CD14-positive monocyte (primary cell): ENCODE measurements at regions of chr11 and their contacts with region 1.

Region 1: DNA sequence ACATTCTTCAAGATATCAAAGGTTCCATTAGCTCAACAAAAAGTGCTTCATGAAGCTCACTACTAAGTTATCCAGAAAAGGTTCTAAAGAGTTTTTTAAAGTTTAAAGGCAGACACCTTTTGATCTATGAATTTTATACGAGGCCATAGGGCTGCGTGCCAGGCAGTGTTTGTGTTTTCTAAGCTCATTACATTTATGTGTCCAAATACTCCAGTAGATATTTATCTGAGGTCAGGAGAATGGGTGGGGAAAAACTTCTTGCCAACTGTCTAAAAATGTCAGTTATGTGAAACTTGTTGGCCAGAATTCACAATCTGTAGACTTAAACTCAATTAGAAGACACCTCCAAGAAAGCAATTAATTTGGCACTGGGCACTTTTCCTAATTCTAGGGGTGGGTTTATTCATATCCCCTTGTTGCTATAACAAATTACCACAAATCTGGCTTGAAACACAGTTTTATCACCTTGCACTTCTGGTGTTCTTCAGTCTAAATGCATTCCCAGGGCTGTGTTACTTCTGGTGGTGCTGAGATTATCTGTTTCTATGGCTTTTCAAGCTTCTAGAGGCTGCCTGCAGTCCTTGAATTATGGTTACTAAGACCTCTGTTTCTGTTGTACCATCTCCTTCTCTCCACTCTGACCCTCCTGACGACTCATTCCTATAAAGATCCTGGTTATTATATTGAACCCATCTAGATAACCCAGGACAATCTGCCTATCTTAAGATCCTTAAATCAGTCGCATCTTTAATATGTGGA is 1030.4 kb upstream of the CNTN5 start:
- DNase-seq: no peak
- H3K4me3 ChIP-seq: no peak overlapping the region
- H3K4me3 Mint-ChIP-seq: no peak overlapping the region
- H3K27ac ChIP-seq: no peak overlapping the region
- H3K27ac Mint-ChIP-seq: no peak overlapping the region
- H3K4me1 ChIP-seq: no peaks in the 10 kb centered on the region
- H3K4me1 Mint-ChIP-seq: no peaks in the 10 kb centered on the region
- H3K27me3 ChIP-seq: no peaks in the 10 kb centered on the region
- H3K27me3 Mint-ChIP-seq: no peaks in the 10 kb centered on the region
- CTCF ChIP-seq: no peak

Region 2: DNA sequence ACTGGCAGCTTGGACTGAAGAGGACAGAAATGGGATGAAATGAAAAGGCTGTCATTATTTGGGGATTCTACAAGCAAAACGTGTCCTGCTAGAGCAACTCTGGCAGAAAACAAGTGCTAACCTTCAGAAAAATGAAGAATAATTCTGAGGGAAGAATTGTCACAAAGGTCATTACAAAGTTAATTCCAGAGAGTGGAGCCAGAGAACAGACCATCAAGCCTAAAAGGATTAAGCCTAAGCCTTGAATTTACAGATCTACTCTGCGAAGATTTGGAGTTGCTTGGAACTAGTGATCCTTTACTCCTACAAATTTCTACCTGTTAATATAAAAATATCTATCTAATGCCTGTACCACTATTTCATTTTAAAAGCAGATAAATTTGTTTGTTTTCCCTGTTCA is 46.8 kb before region 1 on chr11:
- intact Hi-C with region 1: loop called in 1 of 2 experiments (anchors 10 kb)
- DNase-seq: no peak
- H3K4me3 ChIP-seq: no peak overlapping the region
- H3K4me3 Mint-ChIP-seq: no peak overlapping the region
- H3K27ac ChIP-seq: no peak overlapping the region
- H3K27ac Mint-ChIP-seq: no peak overlapping the region
- H3K4me1 ChIP-seq: no peaks in the 10 kb centered on the region
- H3K4me1 Mint-ChIP-seq: no peaks in the 10 kb centered on the region
- H3K27me3 ChIP-seq: no peaks in the 10 kb centered on the region
- H3K27me3 Mint-ChIP-seq: no peaks in the 10 kb centered on the region
- CTCF ChIP-seq: no peak

Region 3: DNA sequence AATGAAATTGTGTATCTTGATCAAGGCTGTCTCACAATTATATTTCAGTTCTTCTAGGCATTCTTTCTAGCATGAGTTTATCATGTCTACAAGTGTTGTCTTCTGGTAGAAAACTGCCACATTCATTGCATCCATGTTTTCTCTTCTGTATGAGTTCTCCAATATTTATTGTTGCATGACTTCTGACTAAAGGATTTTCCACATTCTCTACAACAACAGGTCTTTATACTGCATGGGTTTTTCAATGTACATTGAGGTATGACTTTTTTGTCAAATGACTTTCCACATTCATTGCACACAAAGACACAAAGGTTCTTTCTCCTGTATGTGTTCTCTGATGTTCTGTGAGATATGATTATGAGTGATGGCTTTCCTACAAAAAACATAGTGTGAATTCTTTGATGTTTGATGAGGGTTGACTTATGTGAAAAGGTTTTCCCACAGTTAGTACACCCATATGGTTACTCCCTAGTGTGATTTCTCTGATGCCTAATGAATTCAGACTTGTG is 139.8 kb after region 1 on chr11:
- intact Hi-C with region 1: no loop called
- DNase-seq: no peak
- H3K4me3 ChIP-seq: no peak overlapping the region
- H3K4me3 Mint-ChIP-seq: no peak overlapping the region
- H3K27ac ChIP-seq: no peak overlapping the region
- H3K27ac Mint-ChIP-seq: no peak overlapping the region
- H3K4me1 ChIP-seq: no peaks in the 10 kb centered on the region
- H3K4me1 Mint-ChIP-seq: no peaks in the 10 kb centered on the region
- H3K27me3 ChIP-seq: no peaks in the 10 kb centered on the region
- H3K27me3 Mint-ChIP-seq: no peaks in the 10 kb centered on the region
- CTCF ChIP-seq: no peak